IMR-90 (cell line): ENCODE measurements at regions of chr7 and their contacts with region 1.

Region 1: DNA sequence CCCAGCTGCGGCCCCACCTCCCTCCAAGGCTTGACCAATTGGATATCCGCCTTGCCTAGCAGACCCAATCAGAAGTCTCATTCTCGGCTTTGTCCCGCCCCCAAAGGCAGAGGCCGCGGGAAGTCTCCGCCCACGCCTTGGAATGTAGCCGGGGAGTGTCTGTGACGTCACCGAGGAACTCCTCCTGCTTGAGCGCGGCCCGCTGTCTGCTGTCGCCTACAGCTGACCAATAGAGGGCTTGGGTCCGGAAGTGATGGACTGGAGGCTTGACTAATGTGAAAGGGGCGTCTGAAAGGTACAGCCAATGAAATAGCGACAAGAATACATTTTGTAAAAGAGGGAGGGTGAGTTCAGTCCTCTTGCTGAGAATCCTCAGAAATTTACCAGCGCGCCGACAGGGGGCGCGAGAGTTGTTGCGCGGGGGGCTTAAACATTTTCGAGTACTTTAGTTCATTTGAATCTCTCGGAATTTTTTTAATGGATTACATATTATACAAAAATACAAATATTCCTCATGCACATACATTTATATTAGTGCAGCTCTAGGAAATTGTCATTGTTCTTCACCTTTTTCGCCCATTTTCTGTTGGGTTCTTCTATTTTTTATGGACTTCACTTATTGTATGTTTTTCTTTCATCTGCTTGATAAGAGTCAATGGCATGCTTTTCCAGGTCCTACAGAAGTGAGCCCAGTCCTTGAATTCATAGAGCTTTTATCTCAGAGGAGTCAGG is 376 bp upstream of the CREB3L2 start:
- DNase-seq: peak; percentile 100
- ATAC-seq: peak; percentile 90
- H3K4me3 ChIP-seq: peak overlapping the region; percentile 85
- H3K27ac ChIP-seq: no peak overlapping the region; the same call in 1 of the 2 replicates
- H3K4me1 ChIP-seq: peaks cover 6% of the 10 kb centered on the region
- H3K27me3 ChIP-seq: no peaks in the 10 kb centered on the region
- CTCF ChIP-seq: peak; percentile 95
- POLR2A ChIP-seq: no peak
- RAD21 ChIP-seq: peak; percentile 53

Region 2: GRCh38 chr7:137110091-137110509 is 892.2 kb before region 1 on chr7:
- CTCF ChIA-PET with region 1: no interaction called
- POLR2A ChIA-PET with region 1: no interaction called
- dilution Hi-C with region 1: no loop called
- in situ Hi-C with region 1: no loop called
- intact Hi-C with region 1: no loop called
- DNase-seq: peak; percentile 68
- ATAC-seq: peak; percentile 81
- H3K4me3 ChIP-seq: peak overlapping the region; percentile 22; the same call in 1 of the 2 replicates
- H3K27ac ChIP-seq: peak overlapping the region; percentile 71; the same call in 1 of the 2 replicates
- H3K4me1 ChIP-seq: peaks cover 4% of the 10 kb centered on the region; the same call in 1 of the 2 replicates
- H3K27me3 ChIP-seq: no peaks in the 10 kb centered on the region
- CTCF ChIP-seq: no peak; the same call in 1 of the 2 replicates
- POLR2A ChIP-seq: no peak
- RAD21 ChIP-seq: no peak

Region 3: GRCh38 chr7:137810248-137810647 is 192.0 kb before region 1 on chr7:
- CTCF ChIA-PET with region 1: no interaction called
- POLR2A ChIA-PET with region 1: no interaction called
- dilution Hi-C with region 1: no loop called
- in situ Hi-C with region 1: no loop called
- intact Hi-C with region 1: no loop called
- DNase-seq: no peak
- ATAC-seq: no peak
- H3K4me3 ChIP-seq: no peak overlapping the region
- H3K27ac ChIP-seq: no peak overlapping the region
- H3K4me1 ChIP-seq: no peaks in the 10 kb centered on the region; the same call in 1 of the 2 replicates
- H3K27me3 ChIP-seq: no peaks in the 10 kb centered on the region
- CTCF ChIP-seq: no peak
- POLR2A ChIP-seq: no peak
- RAD21 ChIP-seq: no peak

Region 4: GRCh38 chr7:137909037-137909436 is 93.2 kb before region 1 on chr7:
- CTCF ChIA-PET with region 1: interaction called, 7 read pairs
- POLR2A ChIA-PET with region 1: no interaction called
- dilution Hi-C with region 1: no loop called
- in situ Hi-C with region 1: loop called (anchors 5 kb)
- intact Hi-C with region 1: no loop called
- DNase-seq: peak; percentile 31
- ATAC-seq: no peak
- H3K4me3 ChIP-seq: no peak overlapping the region
- H3K27ac ChIP-seq: no peak overlapping the region
- H3K4me1 ChIP-seq: no peaks in the 10 kb centered on the region
- H3K27me3 ChIP-seq: no peaks in the 10 kb centered on the region
- CTCF ChIP-seq: no peak
- POLR2A ChIP-seq: no peak
- RAD21 ChIP-seq: no peak

Region 5: GRCh38 chr7:137923380-137923779 is 78.9 kb before region 1 on chr7:
- CTCF ChIA-PET with region 1: interaction called, 7 read pairs
- POLR2A ChIA-PET with region 1: no interaction called
- dilution Hi-C with region 1: loop called (anchors 10 kb)
- in situ Hi-C with region 1: no loop called
- intact Hi-C with region 1: loop called (anchors 5 kb)
- DNase-seq: peak; percentile 93
- ATAC-seq: peak; percentile 65
- H3K4me3 ChIP-seq: no peak overlapping the region
- H3K27ac ChIP-seq: no peak overlapping the region
- H3K4me1 ChIP-seq: peaks cover 12% of the 10 kb centered on the region
- H3K27me3 ChIP-seq: no peaks in the 10 kb centered on the region
- CTCF ChIP-seq: no peak
- POLR2A ChIP-seq: no peak
- RAD21 ChIP-seq: peak; percentile 5

Region 6: DNA sequence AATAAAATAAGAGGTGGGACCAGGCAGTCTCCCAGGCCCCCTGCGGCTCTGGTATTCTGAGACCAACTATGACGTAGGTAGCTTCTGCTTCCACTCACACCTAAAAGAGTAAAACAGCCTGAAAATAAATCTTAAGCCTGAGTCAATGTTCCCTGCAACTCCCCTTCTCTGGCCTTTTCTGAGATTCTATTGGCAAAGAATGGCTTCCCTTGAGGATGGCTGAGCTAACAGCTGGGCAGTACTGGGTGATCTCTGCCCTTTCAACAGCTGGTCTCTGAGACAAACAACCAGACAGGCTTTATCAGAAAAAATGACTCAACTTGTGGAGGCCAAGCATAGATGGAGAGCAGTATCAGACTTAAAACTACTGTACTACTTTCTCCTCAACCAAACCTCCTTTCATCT is 59.1 kb before region 1 on chr7:
- CTCF ChIA-PET with region 1: no interaction called
- POLR2A ChIA-PET with region 1: no interaction called
- dilution Hi-C with region 1: no loop called
- in situ Hi-C with region 1: no loop called
- intact Hi-C with region 1: loop called (anchors 1 kb)
- DNase-seq: peak; percentile 98
- ATAC-seq: peak; percentile 80
- H3K4me3 ChIP-seq: no peak overlapping the region
- H3K27ac ChIP-seq: peak overlapping the region; percentile 48; the same call in 1 of the 2 replicates
- H3K4me1 ChIP-seq: peaks cover 29% of the 10 kb centered on the region
- H3K27me3 ChIP-seq: no peaks in the 10 kb centered on the region
- CTCF ChIP-seq: no peak
- POLR2A ChIP-seq: no peak; the same call in 1 of the 2 replicates
- RAD21 ChIP-seq: peak; percentile 9; the same call in 1 of the 2 replicates

Region 7: DNA sequence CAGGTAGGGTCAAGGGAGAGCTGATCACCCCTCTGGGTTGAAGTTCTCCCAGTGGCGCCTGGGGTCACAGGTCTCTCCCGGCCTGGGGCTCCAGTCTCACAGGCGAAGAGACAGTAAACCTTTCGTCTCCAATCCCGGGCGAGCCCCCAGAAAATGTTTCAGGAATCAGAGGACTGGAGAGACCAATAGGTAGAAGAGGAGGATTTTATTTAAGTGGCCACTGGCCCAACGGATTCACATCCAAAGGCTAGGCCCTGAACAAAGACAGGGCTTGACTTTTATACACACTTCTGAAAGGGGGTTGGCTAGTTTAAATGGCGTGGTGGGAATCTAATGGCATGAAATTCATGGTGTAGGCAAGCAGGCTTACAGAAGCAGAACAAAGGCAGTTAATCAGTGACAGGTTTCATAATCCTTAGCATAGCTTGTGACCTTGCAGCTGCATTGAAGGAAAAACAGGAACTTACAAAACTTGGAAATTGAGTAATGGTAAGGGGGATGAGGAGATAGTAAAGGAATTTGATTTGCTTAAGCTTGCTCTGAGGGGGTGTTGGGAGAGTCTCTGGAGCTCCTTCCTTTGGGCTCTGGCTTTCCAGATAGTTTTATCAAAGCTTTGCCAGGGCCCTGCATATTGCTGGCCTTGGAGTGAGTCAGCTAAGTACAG is 563.3 kb after region 1 on chr7:
- CTCF ChIA-PET with region 1: no interaction called
- POLR2A ChIA-PET with region 1: no interaction called
- dilution Hi-C with region 1: no loop called
- in situ Hi-C with region 1: no loop called
- intact Hi-C with region 1: no loop called
- DNase-seq: peak; percentile 78
- ATAC-seq: peak; percentile 75
- H3K4me3 ChIP-seq: no peak overlapping the region
- H3K27ac ChIP-seq: peak overlapping the region; percentile 25; the same call in 1 of the 2 replicates
- H3K4me1 ChIP-seq: no peaks in the 10 kb centered on the region
- H3K27me3 ChIP-seq: no peaks in the 10 kb centered on the region
- CTCF ChIP-seq: no peak
- POLR2A ChIP-seq: no peak
- RAD21 ChIP-seq: no peak